H1 (cell line): ENCODE measurements at regions of chr19 and their contacts with region 1.

Region 1: GRCh38 chr19:48363810-48364563 is at the starts of genes SYNGR4 and TMEM143:
- DNase-seq: peak; percentile 96 to 100
- H3K4me3 ChIP-seq: peak within 1 kb of the TSS; percentile 44 to 90 (median 72)
- H3K27ac ChIP-seq: peak within 1 kb of the TSS; percentile 80
- H3K4me1 ChIP-seq: peaks cover 0 to 5% (median 4%) of the 10 kb centered on the region in 4 experiments; a peak in 4 of 7 replicates
- H3K27me3 ChIP-seq: peaks cover 0 to 10% (median 2%) of the 10 kb centered on the region in 4 experiments; a peak in 3 of 7 replicates
- CTCF ChIP-seq: peak in 1 of 3 experiments; percentile 8; a peak in 1 of 4 replicates
- EP300 ChIP-seq: no peak
- POLR2A ChIP-seq: peak in 1 of 2 experiments; percentile 27; a peak in 2 of 3 replicates
- RAD21 ChIP-seq: no peak
- total RNA-seq, gene SYNGR4: 1.1 TPM in 1 of 2 replicates, not detected in the other
- total RNA-seq, gene TMEM143: 14.2 and 14.7 TPM in 2 replicates

Region 2: DNA sequence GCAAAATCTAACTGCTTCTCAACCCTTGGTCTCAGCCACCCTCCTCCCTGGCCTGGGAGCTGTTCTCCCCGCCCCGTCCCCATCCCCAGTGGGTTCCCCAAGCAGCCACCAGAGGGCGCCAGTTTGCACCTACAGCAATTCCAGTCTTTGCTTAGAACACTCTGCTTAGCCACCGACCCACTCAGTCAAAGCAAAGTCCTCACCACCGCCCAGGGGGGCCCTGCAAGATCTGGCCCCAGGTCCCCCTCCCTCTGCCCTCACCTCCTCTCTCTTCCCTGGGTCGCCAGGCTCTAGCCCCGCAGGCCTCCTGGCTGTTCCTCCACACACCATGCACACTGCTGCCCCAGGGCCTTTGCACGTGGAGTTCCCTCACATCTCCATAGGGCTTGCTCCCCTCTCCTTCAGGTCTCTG is 12.6 kb before region 1 on chr19:
- CTCF ChIA-PET with region 1: interaction called, 12 read pairs
- POLR2A ChIA-PET with region 1: interaction called, 10 read pairs
- DNase-seq: peak in 1 of 2 experiments; percentile 97
- H3K4me3 ChIP-seq: no peak overlapping the region
- H3K27ac ChIP-seq: no peak overlapping the region
- H3K4me1 ChIP-seq: no peaks in the 10 kb centered on the region
- H3K27me3 ChIP-seq: no peaks in the 10 kb centered on the region
- CTCF ChIP-seq: peak; percentile 84 to 98 (median 93)
- EP300 ChIP-seq: no peak
- POLR2A ChIP-seq: no peak
- RAD21 ChIP-seq: peak; percentile 66 to 72